Ovary (tissue), 10 donors: ENCODE measurements at regions of chr2 and their contacts with region 1.

Region 1: GRCh38 chr2:20015472-20016083 is 3.1 kb upstream of the MATN3 start:
- DNase-seq: no peak
- H3K4me3 ChIP-seq: no peak overlapping the region
- H3K27ac ChIP-seq: no peak overlapping the region
- H3K4me1 ChIP-seq: peaks cover 8% of the 10 kb centered on the region
- H3K27me3 ChIP-seq: no peaks in the 10 kb centered on the region
- CTCF ChIP-seq: peak in 2 of 3 donors; percentile 59 to 64
- EP300 ChIP-seq: no peak
- POLR2A ChIP-seq: no peak

Region 2: GRCh38 chr2:20097879-20098714 is 82.5 kb after region 1 on chr2:
- intact Hi-C with region 1: loop called (anchors 2 to 10 kb)
- DNase-seq: peak; percentile 66 to 88 (median 84)
- H3K4me3 ChIP-seq: no peak overlapping the region
- H3K27ac ChIP-seq: no peak overlapping the region
- H3K4me1 ChIP-seq: no peaks in the 10 kb centered on the region
- H3K27me3 ChIP-seq: no peaks in the 10 kb centered on the region
- CTCF ChIP-seq: peak; percentile 71 to 87 (median 80)
- EP300 ChIP-seq: no peak
- POLR2A ChIP-seq: no peak